Sciatic nerve (tissue), 2 donors: ENCODE measurements at regions of chr17 and their contacts with region 1.

Region 1: GRCh38 chr17:57855391-57856035 is 5.7 kb upstream of the MRPS23 start:
- DNase-seq: no peak
- ATAC-seq: no peak

Region 2: DNA sequence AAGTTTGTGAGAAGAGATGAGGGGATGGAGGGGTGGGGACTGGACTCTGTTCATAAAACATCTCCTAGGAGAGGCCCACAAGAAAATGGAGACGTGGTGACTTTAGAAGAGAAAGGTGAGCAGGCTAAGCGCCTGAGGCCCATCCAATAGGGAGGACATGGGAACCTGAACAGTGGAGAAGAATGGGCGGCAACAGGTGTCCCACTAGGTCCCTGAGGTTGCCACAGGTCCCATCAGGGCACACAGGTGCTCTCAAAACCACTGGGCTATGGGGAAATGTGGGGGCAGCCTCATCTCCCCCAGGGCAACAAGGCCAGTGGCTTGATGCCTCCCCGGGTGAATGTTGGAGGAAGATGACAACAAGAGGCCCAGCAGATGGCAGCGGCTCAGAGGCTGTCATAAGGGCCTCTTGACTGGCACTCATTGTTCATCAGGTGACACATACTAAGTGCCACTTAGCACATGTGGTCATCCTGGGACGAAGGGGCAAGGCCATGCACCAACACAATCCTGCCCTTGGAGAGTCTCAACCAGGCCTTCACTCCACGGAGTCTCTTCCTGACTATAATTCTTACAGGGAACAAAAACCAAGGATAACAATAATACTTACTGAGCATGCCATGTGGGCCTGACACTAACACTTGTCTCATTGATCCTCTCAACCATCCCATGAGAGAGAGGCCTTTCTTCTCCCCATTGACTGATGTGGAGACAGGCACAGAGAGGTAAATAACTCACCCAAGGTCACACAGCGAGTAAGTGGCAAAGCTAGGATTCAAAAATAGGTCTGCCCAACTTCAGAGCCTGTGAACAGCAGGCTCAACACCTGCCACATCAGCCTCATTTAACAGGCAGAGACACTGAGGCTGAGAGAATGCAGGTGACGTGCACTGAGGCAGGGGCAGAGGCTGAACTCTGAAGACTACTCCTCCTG is 61.7 kb after region 1 on chr17:
- intact Hi-C with region 1: no loop called
- DNase-seq: no peak
- ATAC-seq: no peak

Region 3: DNA sequence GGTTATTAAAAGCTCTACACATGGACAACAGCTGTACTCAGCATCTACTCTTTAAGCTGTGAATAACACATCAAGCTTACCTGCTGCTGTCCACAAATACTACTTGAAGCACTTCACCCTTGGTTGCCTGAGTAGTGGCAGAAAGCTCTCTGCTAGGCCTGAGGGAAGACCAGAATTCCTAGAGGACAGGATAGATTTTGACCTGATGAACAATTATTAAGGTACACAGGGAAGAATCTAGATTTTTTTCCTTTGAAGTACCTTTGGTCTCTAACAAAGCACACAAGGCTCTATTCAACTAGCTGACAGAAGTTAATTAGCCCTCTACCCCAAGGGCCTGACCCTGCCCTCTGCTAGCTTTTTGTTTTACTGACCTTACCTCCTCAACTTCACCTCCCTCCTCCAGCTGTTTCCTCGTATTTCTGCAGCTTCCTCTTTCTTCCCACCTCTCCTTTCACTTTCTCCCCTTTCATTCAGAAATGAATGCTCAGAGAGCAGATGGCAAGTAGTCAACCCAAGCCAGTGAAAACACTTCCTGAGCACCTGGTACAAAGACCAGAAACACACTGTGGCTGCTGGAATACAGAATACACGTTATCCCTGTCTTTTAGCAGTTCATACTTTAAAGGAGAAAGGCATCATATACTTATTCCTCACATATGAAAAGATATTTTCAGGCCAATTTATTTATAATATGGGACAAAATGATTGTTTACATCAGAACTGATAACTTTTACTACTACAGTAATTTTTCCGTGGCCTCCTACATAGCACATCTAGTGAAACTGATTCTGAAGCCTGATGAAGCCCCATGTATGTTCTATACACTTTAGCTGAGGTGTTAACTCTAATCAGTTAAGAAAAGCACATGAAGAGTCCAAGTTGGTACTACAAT is 138.2 kb after region 1 on chr17:
- intact Hi-C with region 1: loop called (anchors 5 kb)
- DNase-seq: no peak
- ATAC-seq: no peak